Activated CD4-positive, alpha-beta memory T cell treated with anti-CD3 and anti-CD28 coated beads for 36 hours (primary cell): ENCODE measurements at regions of chr9 and their contacts with region 1.

Region 1: DNA sequence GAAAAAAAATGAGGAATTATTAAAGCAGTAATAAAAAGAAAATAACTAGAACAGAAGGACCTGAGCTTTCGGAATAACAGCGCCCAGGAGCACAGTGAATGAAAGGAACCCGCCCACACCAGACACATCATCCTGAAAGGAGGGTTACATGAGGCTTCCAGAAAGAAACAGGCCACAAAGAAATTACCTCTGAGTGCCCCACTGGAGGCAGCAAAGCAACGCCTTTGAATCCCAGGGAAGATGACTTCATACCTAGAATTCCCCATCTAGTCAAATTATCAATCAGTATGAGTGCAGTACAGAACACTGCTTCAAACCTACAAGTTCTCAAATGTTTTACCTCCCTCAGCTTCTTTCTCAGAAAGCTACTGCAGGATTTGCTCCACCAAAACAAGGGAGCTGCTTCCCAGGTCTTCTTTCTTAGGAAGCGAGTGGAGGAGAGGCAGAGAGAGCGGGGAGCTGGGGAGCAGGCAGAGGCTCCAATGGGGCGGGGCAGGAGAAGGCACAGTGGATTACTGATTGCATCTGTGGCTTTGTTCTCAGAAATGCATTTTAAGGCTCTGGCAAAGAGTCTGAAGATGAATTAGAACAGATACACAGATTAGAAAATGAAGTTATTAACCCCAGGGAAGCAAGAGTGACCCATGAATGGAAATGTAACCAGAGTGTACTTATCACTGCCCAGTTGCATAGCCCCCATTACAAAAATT is 87.1 kb downstream of the SEMA4D start:
- DNase-seq: peak; percentile 86
- H3K4me3 Mint-ChIP-seq: peak overlapping the region; percentile 70
- H3K27ac Mint-ChIP-seq: peak overlapping the region; percentile 91
- H3K4me1 Mint-ChIP-seq: peaks cover 91% of the 10 kb centered on the region
- H3K27me3 Mint-ChIP-seq: no peaks in the 10 kb centered on the region

Region 2: GRCh38 chr9:89340332-89340731 is 70.5 kb before region 1 on chr9:
- CTCF ChIA-PET with region 1: interaction called, 3 read pairs
- POLR2A ChIA-PET with region 1: no interaction called
- intact Hi-C with region 1: loop called (anchors 1 kb)
- DNase-seq: no peak
- H3K4me3 Mint-ChIP-seq: no peak overlapping the region
- H3K27ac Mint-ChIP-seq: peak overlapping the region; percentile 76
- H3K4me1 Mint-ChIP-seq: peaks cover 70% of the 10 kb centered on the region
- H3K27me3 Mint-ChIP-seq: no peaks in the 10 kb centered on the region

Region 3: GRCh38 chr9:89477811-89478630 is 67.2 kb after region 1 on chr9:
- CTCF ChIA-PET with region 1: interaction called, 5 read pairs
- POLR2A ChIA-PET with region 1: interaction called, 17 read pairs
- intact Hi-C with region 1: no loop called
- DNase-seq: peak; percentile 78
- H3K4me3 Mint-ChIP-seq: peak overlapping the region; percentile 79
- H3K27ac Mint-ChIP-seq: peak overlapping the region; percentile 97
- H3K4me1 Mint-ChIP-seq: peaks cover 88% of the 10 kb centered on the region
- H3K27me3 Mint-ChIP-seq: no peaks in the 10 kb centered on the region

Region 4: DNA sequence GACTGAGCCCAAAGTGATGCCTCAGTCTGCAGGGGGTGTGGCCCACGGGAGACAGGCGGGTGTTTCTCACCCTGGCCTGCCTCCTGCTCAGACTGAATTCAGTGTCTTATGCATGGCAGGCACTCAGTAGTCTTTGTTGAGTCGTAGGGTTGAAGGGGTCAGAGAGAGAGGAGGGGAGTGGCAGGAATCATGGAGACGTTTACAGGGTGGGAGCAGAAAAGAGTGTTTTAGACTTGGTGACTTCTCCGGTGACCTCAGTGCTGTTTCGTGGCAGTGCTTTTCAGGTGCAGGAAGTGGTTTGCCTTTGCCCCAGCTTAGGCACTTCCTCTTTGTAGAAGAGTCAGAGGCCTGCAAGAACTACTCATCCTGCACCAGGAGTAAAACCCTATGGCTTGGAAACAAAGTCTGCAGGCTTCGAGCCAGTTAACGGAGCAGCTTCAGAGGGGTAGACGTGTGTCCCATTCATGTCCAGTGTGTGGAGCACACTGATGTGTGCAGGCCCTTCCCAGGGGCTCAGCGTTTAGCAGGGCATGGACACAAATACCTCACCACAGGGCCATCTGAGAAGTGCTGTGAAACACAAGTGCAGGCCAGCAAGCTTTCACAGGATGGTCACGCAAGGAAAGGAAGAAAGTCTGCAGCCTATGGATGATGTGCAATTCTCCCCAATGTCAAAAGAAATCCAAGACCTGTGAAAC is 111.6 kb after region 1 on chr9:
- CTCF ChIA-PET with region 1: interaction called, 14 read pairs
- POLR2A ChIA-PET with region 1: interaction called, 3 read pairs
- intact Hi-C with region 1: no loop called
- DNase-seq: peak; percentile 89
- H3K4me3 Mint-ChIP-seq: peak overlapping the region; percentile 58
- H3K27ac Mint-ChIP-seq: peak overlapping the region; percentile 92
- H3K4me1 Mint-ChIP-seq: peaks cover 89% of the 10 kb centered on the region
- H3K27me3 Mint-ChIP-seq: no peaks in the 10 kb centered on the region

Region 5: DNA sequence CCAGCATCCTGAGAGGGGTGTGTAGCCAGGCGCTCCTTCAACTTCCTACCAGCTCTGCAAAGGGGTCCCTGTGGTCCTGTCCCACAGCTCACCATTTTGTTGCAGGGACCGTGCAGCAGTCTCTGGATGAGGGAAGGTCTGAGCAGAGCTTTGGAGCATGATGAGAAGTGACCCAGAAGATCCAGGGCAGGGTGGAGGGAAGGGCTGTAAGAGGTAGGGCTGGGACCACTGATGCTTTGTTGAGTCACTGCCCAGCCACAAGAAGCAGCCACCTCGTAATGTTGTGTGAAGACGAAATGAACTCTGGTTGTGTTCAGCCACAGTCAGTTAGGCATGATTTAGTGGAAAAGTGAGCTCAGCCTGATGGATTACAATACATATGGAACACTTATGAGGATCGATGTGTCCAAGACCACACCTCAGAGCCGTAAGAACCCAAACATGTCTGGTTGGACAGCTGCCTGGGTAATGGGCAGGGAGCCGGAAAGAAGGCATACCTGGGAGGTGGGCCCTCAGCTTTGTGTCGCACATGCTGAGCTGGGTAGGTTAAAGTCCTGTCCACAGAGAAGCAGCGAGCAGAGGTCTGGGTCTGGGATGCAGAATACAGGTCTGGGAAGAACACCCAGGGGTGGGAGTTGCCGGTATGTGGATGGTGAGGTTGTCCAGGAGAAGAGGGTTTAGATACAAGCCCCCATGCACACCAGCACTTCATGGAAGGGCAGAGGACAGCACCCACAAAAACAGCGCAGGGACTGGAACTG is 444.1 kb after region 1 on chr9:
- CTCF ChIA-PET with region 1: no interaction called
- POLR2A ChIA-PET with region 1: no interaction called
- intact Hi-C with region 1: no loop called
- DNase-seq: peak; percentile 1
- H3K4me3 Mint-ChIP-seq: no peak overlapping the region
- H3K27ac Mint-ChIP-seq: no peak overlapping the region
- H3K4me1 Mint-ChIP-seq: no peaks in the 10 kb centered on the region
- H3K27me3 Mint-ChIP-seq: peaks cover 3% of the 10 kb centered on the region